Vagina (tissue), 2 donors: ENCODE measurements at regions of chr13 and their contacts with region 1.

Region 1: DNA sequence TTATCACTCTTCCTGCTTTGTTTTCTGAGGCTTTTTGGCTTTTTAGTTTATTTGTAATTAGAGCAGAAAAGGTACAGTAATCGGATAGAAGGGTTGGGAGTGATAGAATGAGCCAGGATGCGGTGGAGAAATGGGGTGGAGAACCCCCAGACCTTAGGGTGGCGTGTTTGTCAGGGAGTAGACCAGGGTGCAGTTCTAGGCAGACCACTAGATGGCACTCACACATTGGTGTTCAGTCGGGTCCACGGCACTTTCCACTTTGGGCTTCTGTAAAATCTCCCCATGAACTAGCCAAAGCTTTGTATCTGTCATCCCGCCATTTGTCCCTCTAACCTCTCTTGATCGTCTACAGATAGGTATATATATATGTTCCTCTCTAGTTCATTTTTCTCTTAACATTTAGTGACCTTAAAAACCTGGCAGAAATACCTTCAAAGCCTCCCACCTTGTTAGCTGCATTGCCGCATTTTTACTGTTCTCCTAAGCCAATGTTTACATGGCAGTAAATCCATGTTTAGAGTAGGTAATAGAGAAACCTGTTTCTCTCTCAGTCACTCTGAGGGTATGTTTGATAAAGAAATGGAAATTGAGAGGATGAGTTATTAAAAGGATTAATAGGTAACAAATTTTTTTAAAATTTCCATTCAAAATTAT is 154.9 kb downstream of the TM9SF2 start:
- DNase-seq: no peak
- H3K4me3 ChIP-seq: no peak overlapping the region
- H3K27ac ChIP-seq: no peak overlapping the region
- H3K4me1 ChIP-seq: peaks cover 18% of the 10 kb centered on the region
- H3K27me3 ChIP-seq: no peaks in the 10 kb centered on the region
- CTCF ChIP-seq: peak; percentile 72 to 94 (median 85)
- POLR2A ChIP-seq: no peak

Region 2: GRCh38 chr13:99542788-99543406 is 113.3 kb before region 1 on chr13:
- intact Hi-C with region 1: no loop called
- DNase-seq: no peak
- H3K4me3 ChIP-seq: no peak overlapping the region
- H3K27ac ChIP-seq: no peak overlapping the region
- H3K4me1 ChIP-seq: no peaks in the 10 kb centered on the region
- H3K27me3 ChIP-seq: no peaks in the 10 kb centered on the region
- CTCF ChIP-seq: no peak
- POLR2A ChIP-seq: no peak

Region 3: GRCh38 chr13:100069278-100069677 is 413.1 kb after region 1 on chr13:
- intact Hi-C with region 1: no loop called
- DNase-seq: no peak
- H3K4me3 ChIP-seq: no peak overlapping the region
- H3K27ac ChIP-seq: no peak overlapping the region
- H3K4me1 ChIP-seq: no peaks in the 10 kb centered on the region
- H3K27me3 ChIP-seq: no peaks in the 10 kb centered on the region
- CTCF ChIP-seq: no peak
- POLR2A ChIP-seq: no peak

Region 4: DNA sequence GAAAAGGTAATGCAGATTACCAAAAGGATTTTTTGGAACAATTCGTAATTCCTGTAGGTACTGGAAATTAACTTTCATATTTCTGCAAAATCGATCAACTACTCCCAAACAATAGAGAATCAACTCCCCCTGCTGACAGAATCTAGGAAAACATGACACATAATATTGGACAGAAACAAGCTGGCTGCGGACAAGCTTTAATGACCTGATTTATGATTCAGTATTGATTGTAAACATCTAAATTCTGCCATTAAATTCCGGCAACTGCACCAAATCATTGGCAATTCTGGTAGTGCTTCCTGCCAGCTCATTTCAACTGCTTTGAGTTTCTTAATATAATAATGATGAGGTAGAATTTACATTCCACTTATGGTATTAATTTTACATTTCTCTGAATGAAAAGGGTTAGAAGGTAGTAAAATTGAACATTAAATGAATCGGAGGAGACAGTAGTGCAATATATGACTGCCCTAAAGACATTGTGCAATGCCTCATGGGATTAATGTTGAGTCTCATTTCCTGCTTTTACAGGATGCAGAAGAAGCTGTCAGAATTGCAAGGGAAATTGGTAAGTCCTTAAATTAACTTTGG is 579.2 kb after region 1 on chr13:
- intact Hi-C with region 1: loop called (anchors 10 kb)
- DNase-seq: no peak
- H3K4me3 ChIP-seq: no peak overlapping the region
- H3K27ac ChIP-seq: no peak overlapping the region
- H3K4me1 ChIP-seq: peaks cover 28% of the 10 kb centered on the region
- H3K27me3 ChIP-seq: no peaks in the 10 kb centered on the region
- CTCF ChIP-seq: peak; percentile 19 to 45 (median 36)
- POLR2A ChIP-seq: no peak

Region 5: GRCh38 chr13:100514788-100515409 is 858.7 kb after region 1 on chr13:
- intact Hi-C with region 1: loop called (anchors 10 kb)
- DNase-seq: peak in 1 of 2 donors; percentile 52
- H3K4me3 ChIP-seq: no peak overlapping the region
- H3K27ac ChIP-seq: no peak overlapping the region
- H3K4me1 ChIP-seq: peaks cover 12% of the 10 kb centered on the region
- H3K27me3 ChIP-seq: no peaks in the 10 kb centered on the region
- CTCF ChIP-seq: peak; percentile 72 to 93 (median 84)
- POLR2A ChIP-seq: no peak